ENCODE measurements at regions of chr14 and their contacts with region 1.

Region 1: GRCh38 chr14:94129111-94129757 is at the start of gene IFI27L2:
- DNase-seq: peak; percentile 85
- H3K4me3 ChIP-seq: peak within 1 kb of the TSS; percentile 71
- H3K27ac ChIP-seq: no peak within 1 kb of the TSS
- H3K4me1 ChIP-seq: peaks cover 14% of the 10 kb centered on the region
- CTCF ChIP-seq: peak; percentile 40; the same call in 1 of the 2 replicates
- total RNA-seq, gene IFI27L2: 94.2 and 102 TPM in 2 replicates

Region 2: GRCh38 chr14:94080471-94081289 is 48.6 kb before region 1 on chr14 and contains the start of gene DDX24:
- CTCF ChIA-PET with region 1: interaction called, 6 read pairs
- POLR2A ChIA-PET with region 1: interaction called, 5 read pairs
- intact Hi-C with region 1: loop called (anchors 5 kb)
- DNase-seq: peak; percentile 96
- H3K4me3 ChIP-seq: peak within 1 kb of the TSS; percentile 91
- H3K27ac ChIP-seq: peak within 1 kb of the TSS; percentile 50
- H3K4me1 ChIP-seq: peaks cover 38% of the 10 kb centered on the region
- CTCF ChIP-seq: no peak
- total RNA-seq, gene DDX24: 81.5 and 91.5 TPM in 2 replicates

Region 3: GRCh38 chr14:94203473-94204210 is 74.4 kb after region 1 on chr14:
- CTCF ChIA-PET with region 1: no interaction called
- POLR2A ChIA-PET with region 1: no interaction called
- intact Hi-C with region 1: no loop called
- DNase-seq: no peak
- H3K4me3 ChIP-seq: no peak overlapping the region
- H3K27ac ChIP-seq: no peak overlapping the region
- H3K4me1 ChIP-seq: no peaks in the 10 kb centered on the region
- CTCF ChIP-seq: no peak

Region 4: DNA sequence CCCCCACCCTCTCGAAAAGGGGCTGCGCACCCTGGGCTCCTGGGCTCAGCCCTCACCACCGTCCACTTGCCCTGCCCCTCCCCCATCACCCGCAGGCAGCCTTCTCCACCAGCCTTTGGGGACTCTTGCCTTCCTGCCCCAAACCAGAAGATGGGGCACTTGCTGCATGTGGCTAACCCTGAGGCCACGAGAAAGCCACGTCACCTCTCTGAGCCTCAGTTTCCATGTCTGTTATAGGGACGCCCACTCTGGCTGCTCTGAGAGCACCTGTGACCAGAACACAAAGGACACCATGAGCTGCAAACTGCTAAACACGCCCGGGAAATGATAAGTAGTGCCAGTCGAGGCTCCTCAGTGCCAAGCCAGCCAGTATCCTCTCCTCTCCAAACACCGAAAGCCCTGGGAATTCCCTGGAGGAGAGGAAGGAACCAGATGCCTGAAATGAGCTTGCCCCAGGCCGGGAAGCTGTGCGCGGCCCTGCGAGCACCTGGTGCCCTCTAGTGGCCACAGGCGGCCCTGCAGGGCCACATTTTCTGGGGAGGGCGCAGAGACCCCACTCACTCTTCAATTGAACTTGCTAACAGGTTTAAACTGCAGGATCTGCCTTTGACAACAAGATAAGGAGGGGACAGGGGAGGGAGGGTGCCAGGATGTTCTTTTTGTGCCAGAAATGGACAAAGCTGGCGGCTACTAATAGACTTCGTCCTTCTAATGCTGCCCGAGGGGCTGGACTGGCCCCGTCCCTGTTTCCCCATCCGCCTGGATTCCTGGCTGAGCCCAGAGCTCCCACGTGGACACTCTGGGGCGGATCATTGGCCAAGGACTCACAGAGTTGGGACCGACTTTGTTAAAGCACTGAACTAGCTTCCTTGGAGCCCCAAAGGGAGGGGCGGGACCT is 357.0 kb after region 1 on chr14:
- CTCF ChIA-PET with region 1: no interaction called
- POLR2A ChIA-PET with region 1: no interaction called
- intact Hi-C with region 1: loop called (anchors 5 kb)
- DNase-seq: peak; percentile 34
- H3K4me3 ChIP-seq: no peak overlapping the region
- H3K27ac ChIP-seq: no peak overlapping the region
- H3K4me1 ChIP-seq: no peaks in the 10 kb centered on the region
- CTCF ChIP-seq: peak; percentile 98

Measured in OCI-LY7 (cell line).